Activated CD8-positive, alpha-beta T cell treated with anti-CD3 and anti-CD28 coated beads for 36 hours (primary cell): ENCODE measurements at regions of chr13 and their contacts with region 1.

Region 1: GRCh38 chr13:94601446-94602431 is at the start of gene GPR180:
- DNase-seq: peak; percentile 97
- ATAC-seq: peak; percentile 100
- H3K4me3 Mint-ChIP-seq: peak within 1 kb of the TSS; percentile 84
- H3K27ac Mint-ChIP-seq: peak within 1 kb of the TSS; percentile 87
- H3K4me1 Mint-ChIP-seq: peaks cover 32% of the 10 kb centered on the region
- H3K27me3 Mint-ChIP-seq: no peaks in the 10 kb centered on the region
- CTCF ChIP-seq: no peak
- total RNA-seq, gene GPR180: 7.5 to 7.7 TPM

Region 2: GRCh38 chr13:94416454-94417080 is 185.2 kb before region 1 on chr13:
- CTCF ChIA-PET with region 1: no interaction called
- POLR2A ChIA-PET with region 1: interaction called, 3 read pairs
- intact Hi-C with region 1: loop called (anchors 1 kb)
- DNase-seq: no peak
- ATAC-seq: no peak
- H3K4me3 Mint-ChIP-seq: no peak overlapping the region
- H3K27ac Mint-ChIP-seq: no peak overlapping the region
- H3K4me1 Mint-ChIP-seq: peaks cover 44% of the 10 kb centered on the region
- H3K27me3 Mint-ChIP-seq: peaks cover 2% of the 10 kb centered on the region
- CTCF ChIP-seq: no peak